ENCODE measurements at regions of chr7 and their contacts with region 1.

Region 1: DNA sequence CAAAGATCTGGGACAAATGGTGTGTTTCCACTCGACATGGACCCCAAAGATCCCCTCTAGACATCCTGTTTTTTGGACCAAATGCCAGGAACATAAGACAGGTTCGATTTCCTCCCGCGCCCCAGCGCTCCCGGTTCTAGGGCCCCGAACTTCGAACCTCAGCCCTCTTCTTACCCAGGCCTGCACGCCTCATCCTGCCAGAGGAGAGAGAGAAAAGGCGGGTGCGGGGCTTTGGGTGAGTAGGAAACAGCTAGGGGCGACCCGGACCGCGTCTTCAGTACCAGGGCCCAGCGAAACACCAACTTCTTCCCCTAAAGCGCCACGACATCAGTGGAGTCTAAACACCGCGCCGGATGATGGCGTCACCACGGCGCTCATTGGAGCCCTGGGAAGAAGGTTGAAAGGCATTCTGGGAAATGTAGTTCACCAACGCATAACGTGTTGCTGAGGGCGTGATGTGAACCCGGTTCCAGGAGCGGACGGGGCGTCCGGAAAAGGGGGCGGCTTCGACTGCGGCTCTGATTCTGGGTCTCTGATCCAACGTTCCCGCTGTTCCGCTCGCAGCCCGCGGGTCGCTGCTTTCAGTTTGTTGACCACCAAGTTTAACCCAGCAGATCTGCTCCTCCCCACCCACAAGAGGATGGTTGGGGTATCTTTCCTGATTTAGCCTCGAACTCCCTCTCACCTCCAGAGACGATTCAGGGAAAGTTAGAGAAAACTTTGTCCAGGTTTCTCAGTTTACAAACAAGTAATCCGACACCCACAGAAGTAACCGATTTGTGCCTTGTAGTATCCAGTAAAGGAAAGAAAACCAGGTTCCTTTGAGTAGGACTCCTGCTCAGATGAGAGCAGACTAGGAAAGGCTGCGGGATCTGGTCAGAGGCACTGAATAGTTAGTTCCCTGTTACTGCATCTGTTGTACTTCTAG is at the start of gene BET1:
- DNase-seq: peak; percentile 96
- total RNA-seq, gene BET1: 13.2 TPM

Region 2: DNA sequence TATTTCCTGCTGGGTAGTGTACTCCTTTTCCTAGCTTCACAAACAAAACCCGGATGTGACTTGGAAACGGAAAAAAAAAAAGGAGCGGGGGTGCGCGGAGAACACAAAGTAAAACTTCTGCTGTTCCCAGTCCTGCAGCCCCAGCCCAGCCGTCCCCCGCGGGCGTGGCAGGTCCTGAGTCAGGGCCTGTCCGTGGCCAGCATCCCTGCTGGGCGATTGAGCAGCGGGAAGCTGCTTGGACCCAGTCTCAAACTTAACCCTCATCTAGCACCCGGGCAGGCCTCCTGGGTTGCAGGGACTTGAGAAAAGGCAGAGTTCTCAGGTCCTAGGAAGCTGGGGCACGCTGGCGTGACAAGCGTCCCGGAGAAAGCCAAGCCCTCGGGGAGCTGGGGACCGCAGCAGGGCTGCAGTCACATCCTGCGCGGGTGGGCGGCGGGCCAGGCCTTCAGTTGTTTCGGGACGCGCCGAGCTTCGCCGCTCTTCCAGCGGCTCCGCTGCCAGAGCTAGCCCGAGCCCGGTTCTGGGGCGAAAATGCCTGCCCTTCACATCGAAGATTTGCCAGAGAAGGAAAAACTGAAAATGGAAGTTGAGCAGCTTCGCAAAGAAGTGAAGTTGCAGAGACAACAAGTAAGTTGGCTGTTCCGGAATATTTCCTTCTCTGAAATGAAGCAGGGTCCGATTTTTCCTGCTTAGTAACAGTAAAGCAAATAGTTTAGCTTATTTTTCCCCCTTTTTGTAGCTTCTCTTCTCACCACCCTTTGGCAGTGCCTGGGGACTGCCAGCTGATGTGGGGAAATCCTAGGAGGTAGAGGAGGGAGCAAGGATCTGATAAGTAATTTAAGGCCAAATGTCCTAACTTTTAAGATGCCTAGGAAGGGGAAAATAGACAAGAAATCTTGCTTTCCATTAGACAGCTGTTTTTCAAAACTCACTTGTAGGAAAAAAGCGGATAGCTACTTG is 82.4 kb before region 1 on chr7 and contains the start of gene GNG11:
- intact Hi-C with region 1: loop called (anchors 5 kb)
- DNase-seq: peak; percentile 89
- total RNA-seq, gene GNG11: 14.3 TPM

Region 3: GRCh38 chr7:94059746-94060145 is 55.5 kb after region 1 on chr7:
- intact Hi-C with region 1: loop called (anchors 10 kb)
- DNase-seq: no peak

Measured in cardiac septum (tissue), 1 donor.